Activated CD4-positive, alpha-beta memory T cell treated with anti-CD3 and anti-CD28 coated beads for 36 hours (primary cell): ENCODE measurements at regions of chr1 and their contacts with region 1.

Region 1: GRCh38 chr1:221777431-221778072 is 35.7 kb upstream of the DUSP10 start:
- DNase-seq: peak; percentile 73
- H3K4me3 Mint-ChIP-seq: peak overlapping the region; percentile 38
- H3K27ac Mint-ChIP-seq: peak overlapping the region; percentile 79
- H3K4me1 Mint-ChIP-seq: peaks cover 71% of the 10 kb centered on the region
- H3K27me3 Mint-ChIP-seq: no peaks in the 10 kb centered on the region

Region 2: DNA sequence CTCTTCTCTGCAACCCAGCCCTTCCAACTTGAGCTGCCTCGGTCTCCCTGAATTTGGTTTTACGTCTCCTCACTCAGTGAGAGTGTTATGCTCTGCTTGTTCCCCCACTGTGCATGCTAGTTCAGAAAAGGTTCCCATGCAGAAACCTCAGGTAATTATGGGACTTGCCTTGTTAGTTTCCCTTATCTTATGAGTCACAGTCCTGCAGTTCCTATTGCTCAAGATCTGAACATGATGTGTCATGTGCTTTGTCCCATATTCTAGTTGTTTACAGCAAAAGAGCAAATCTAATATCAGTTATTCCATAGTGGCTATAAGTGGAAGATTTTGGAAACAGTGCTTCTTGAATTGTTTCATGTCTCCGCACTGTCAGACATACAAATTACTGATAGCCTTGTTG is 110.0 kb before region 1 on chr1:
- CTCF ChIA-PET with region 1: no interaction called
- POLR2A ChIA-PET with region 1: no interaction called
- intact Hi-C with region 1: no loop called
- DNase-seq: no peak
- H3K4me3 Mint-ChIP-seq: no peak overlapping the region
- H3K27ac Mint-ChIP-seq: no peak overlapping the region
- H3K4me1 Mint-ChIP-seq: peaks cover 7% of the 10 kb centered on the region
- H3K27me3 Mint-ChIP-seq: peaks cover 5% of the 10 kb centered on the region

Region 3: GRCh38 chr1:221725735-221726672 is 51.5 kb before region 1 on chr1:
- CTCF ChIA-PET with region 1: no interaction called
- POLR2A ChIA-PET with region 1: no interaction called
- intact Hi-C with region 1: loop called (anchors 1 kb)
- DNase-seq: no peak
- H3K4me3 Mint-ChIP-seq: peak overlapping the region; percentile 59
- H3K27ac Mint-ChIP-seq: peak overlapping the region; percentile 96
- H3K4me1 Mint-ChIP-seq: peaks cover 80% of the 10 kb centered on the region
- H3K27me3 Mint-ChIP-seq: no peaks in the 10 kb centered on the region

Region 4: GRCh38 chr1:221809031-221810029 is 31.8 kb after region 1 on chr1:
- CTCF ChIA-PET with region 1: interaction called, 3 read pairs
- POLR2A ChIA-PET with region 1: no interaction called
- intact Hi-C with region 1: loop called (anchors 1 kb)
- DNase-seq: no peak
- H3K4me3 Mint-ChIP-seq: no peak overlapping the region
- H3K27ac Mint-ChIP-seq: no peak overlapping the region
- H3K4me1 Mint-ChIP-seq: peaks cover 35% of the 10 kb centered on the region
- H3K27me3 Mint-ChIP-seq: no peaks in the 10 kb centered on the region

Region 5: DNA sequence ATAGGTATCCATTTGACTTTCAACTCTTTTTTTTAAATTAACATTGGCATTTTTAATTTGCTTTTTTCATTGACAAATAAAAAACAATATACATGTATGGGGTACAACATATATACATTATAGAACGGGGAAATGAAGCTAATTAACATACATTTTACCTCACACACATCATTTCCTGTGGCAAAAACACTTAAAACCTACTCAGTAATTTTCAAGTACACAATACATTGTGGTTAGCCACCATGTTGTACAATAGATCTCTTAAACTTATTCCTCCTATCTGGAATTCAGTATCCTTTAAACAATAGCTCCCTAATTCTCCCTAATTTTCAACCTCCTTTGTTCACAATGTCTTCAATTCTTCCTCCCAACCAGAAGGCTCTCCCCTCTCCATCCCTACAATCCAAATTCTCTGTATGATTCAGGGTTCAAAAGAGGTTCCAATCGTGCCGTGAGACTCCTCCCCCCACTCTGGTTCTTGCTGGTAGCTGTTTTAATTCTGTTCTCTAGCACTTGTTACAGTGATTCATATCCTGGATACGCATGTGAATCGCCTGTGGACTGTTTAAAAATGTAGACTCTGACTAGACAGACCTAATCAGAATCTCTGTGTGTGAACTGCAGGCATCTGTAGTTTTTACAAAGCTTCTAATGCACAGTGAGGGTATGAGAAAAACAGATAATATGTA is 51.9 kb after region 1 on chr1:
- CTCF ChIA-PET with region 1: interaction called, 3 read pairs
- POLR2A ChIA-PET with region 1: interaction called, 4 read pairs
- intact Hi-C with region 1: loop called (anchors 1 kb)
- DNase-seq: peak; percentile 83
- H3K4me3 Mint-ChIP-seq: peak overlapping the region; percentile 30
- H3K27ac Mint-ChIP-seq: peak overlapping the region; percentile 90
- H3K4me1 Mint-ChIP-seq: peaks cover 53% of the 10 kb centered on the region
- H3K27me3 Mint-ChIP-seq: no peaks in the 10 kb centered on the region

Region 6: DNA sequence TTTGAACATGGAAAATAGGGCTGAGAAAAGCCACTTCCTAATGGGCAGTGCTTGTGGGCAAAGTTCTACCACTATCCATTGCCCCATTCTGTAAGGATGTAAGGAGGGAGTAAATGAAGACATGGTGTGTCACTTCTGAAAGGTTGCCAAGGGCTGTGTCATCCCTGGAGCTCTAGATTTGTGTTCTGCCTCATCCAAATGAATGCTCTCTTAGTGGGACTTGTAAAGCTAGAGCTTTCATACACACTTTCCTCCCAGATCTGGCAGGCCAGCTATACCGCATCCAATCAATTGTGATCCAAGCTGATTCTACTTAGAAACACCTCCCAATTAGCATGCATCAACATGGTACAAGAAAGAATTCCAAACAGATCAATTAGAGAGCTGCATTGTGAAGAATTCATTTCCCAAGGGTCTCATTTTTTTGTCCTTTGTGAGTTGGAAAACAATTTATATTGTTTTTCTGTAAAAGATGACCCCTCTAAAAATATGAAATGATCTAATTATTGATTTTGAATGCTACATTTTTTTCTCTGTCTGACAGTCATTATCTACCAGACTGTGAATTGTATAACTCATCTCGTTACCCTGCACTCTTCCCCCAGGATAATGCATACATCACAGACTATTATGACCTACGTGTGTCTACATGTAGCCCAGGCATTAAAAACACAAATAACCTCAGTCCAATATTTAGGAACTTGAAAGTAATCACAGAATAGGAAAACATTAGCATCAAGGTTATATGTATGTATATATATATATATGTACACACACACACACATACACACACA is 81.5 kb after region 1 on chr1:
- CTCF ChIA-PET with region 1: no interaction called
- POLR2A ChIA-PET with region 1: no interaction called
- intact Hi-C with region 1: loop called (anchors 1 kb)
- DNase-seq: peak; percentile 25
- H3K4me3 Mint-ChIP-seq: no peak overlapping the region
- H3K27ac Mint-ChIP-seq: no peak overlapping the region
- H3K4me1 Mint-ChIP-seq: peaks cover 14% of the 10 kb centered on the region
- H3K27me3 Mint-ChIP-seq: no peaks in the 10 kb centered on the region